ENCODE measurements at regions of chr4 and their contacts with region 1.

Region 1: DNA sequence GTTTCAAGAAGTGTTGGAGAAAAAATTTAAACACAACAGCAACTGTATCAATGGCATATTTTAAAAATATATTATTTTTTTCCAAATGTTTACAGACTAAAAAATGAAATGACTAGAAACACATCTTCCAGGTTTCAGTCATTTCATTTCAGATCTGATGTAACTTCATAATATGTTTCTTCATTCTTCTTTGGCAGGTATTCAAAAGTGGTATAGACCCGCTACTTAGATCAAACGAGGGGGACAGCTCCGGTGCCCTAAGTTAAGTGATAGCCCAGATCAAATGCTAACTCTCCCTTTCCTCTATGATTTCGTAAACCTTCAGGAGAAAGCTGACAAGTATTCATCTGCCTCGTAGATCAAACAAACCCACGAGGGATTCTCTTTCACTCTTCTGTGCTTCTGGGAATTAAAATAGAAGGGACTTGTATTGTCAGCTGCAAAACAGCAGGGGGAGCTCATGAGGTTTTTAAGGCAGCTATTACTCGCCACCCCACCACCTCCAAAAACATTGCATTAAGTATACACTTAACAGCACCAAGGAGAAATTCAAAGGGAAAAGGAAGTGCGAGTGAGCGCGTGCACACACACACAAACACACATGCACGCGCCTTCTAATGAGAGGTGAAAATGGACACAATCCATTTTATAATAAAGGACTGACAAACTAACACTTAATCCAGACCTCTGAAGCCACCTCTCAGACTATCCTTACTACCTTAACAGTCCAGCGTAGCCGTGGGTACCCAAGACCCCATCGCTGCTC is 21.4 kb downstream of the HELT start:
- DNase-seq: peak in 7 of 9 donors; percentile 14 to 63 (median 57)
- ATAC-seq: peak; percentile 82
- H3K4me3 ChIP-seq: no peak overlapping the region
- H3K4me3 Mint-ChIP-seq: peak overlapping the region in 7 of 10 donors; percentile 9 to 76 (median 37)
- H3K27ac ChIP-seq: no peak overlapping the region
- H3K27ac Mint-ChIP-seq: no peak overlapping the region
- H3K4me1 ChIP-seq: peaks cover 0 to 2% of the 10 kb centered on the region in 2 donors
- H3K4me1 Mint-ChIP-seq: peaks cover 0 to 8% (median 5%) of the 10 kb centered on the region in 7 donors
- H3K27me3 ChIP-seq: no peaks in the 10 kb centered on the region
- H3K27me3 Mint-ChIP-seq: peaks cover 19 to 26% (median 22%) of the 10 kb centered on the region in 5 donors

Region 2: GRCh38 chr4:185020293-185020808 is 19.3 kb before region 1 on chr4:
- CTCF ChIA-PET with region 1: no interaction called
- POLR2A ChIA-PET with region 1: no interaction called
- intact Hi-C with region 1: no loop called
- DNase-seq: no peak
- ATAC-seq: no peak
- H3K4me3 ChIP-seq: no peak overlapping the region
- H3K4me3 Mint-ChIP-seq: peak overlapping the region in 1 of 10 donors; percentile 40
- H3K27ac ChIP-seq: no peak overlapping the region
- H3K27ac Mint-ChIP-seq: peak overlapping the region in 1 of 9 donors; percentile 42
- H3K4me1 ChIP-seq: no peaks in the 10 kb centered on the region
- H3K4me1 Mint-ChIP-seq: peaks cover 4 to 27% (median 15%) of the 10 kb centered on the region in 7 donors
- H3K27me3 ChIP-seq: no peaks in the 10 kb centered on the region
- H3K27me3 Mint-ChIP-seq: peaks cover 69 to 94% (median 72%) of the 10 kb centered on the region in 5 donors

Region 3: GRCh38 chr4:185096032-185096653 is 56.5 kb after region 1 on chr4:
- CTCF ChIA-PET with region 1: interaction called, 16 read pairs
- POLR2A ChIA-PET with region 1: no interaction called
- intact Hi-C with region 1: loop called (anchors 1 to 2 kb)
- DNase-seq: peak in 6 of 9 donors; percentile 16 to 39 (median 27)
- ATAC-seq: peak; percentile 27
- H3K4me3 ChIP-seq: no peak overlapping the region
- H3K4me3 Mint-ChIP-seq: no peak overlapping the region
- H3K27ac ChIP-seq: no peak overlapping the region
- H3K27ac Mint-ChIP-seq: no peak overlapping the region
- H3K4me1 ChIP-seq: no peaks in the 10 kb centered on the region
- H3K4me1 Mint-ChIP-seq: no peaks in the 10 kb centered on the region
- H3K27me3 ChIP-seq: no peaks in the 10 kb centered on the region
- H3K27me3 Mint-ChIP-seq: peaks cover 9 to 30% (median 14%) of the 10 kb centered on the region in 5 donors

Region 4: DNA sequence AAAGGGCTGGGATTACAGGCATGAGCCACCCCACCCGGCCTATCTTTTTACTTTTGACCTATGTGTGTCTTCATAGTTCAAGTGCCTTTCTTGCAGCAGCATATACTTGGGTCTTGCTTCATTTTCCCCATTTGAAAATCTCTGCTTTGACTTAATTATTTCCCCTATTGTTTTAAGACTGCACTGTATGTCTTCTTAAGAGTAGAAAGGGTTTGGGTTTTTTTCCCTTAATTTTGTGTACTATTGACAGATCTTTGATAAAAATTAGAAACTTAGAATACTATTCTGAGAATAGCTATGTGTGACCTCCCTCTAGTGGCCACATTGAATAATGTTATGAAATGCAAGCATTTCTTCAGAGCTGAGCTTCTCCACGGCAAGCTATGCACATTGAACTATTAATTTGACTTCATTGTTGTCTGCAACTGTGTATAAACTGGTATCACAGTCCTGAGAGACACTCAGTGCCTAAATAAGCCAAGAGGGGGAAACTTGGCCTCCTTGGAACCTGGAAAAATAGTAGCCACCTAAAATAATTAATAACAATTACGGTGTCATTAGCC is 94.7 kb after region 1 on chr4:
- CTCF ChIA-PET with region 1: interaction called, 3 read pairs
- POLR2A ChIA-PET with region 1: no interaction called
- intact Hi-C with region 1: loop called (anchors 1 kb)
- DNase-seq: peak in 6 of 9 donors; percentile 22 to 52 (median 40)
- ATAC-seq: peak; percentile 86
- H3K4me3 ChIP-seq: no peak overlapping the region
- H3K4me3 Mint-ChIP-seq: no peak overlapping the region
- H3K27ac ChIP-seq: no peak overlapping the region
- H3K27ac Mint-ChIP-seq: no peak overlapping the region
- H3K4me1 ChIP-seq: no peaks in the 10 kb centered on the region
- H3K4me1 Mint-ChIP-seq: no peaks in the 10 kb centered on the region
- H3K27me3 ChIP-seq: peaks cover 0 to 3% of the 10 kb centered on the region in 2 donors
- H3K27me3 Mint-ChIP-seq: peaks cover 29 to 68% (median 40%) of the 10 kb centered on the region in 5 donors

Region 5: GRCh38 chr4:185304944-185305690 is 265.4 kb after region 1 on chr4:
- CTCF ChIA-PET with region 1: interaction called, 6 read pairs
- POLR2A ChIA-PET with region 1: no interaction called
- intact Hi-C with region 1: loop called in 1 of 2 experiments (anchors 1 kb)
- DNase-seq: peak in 7 of 9 donors; percentile 0 to 44 (median 36)
- ATAC-seq: peak; percentile 59
- H3K4me3 ChIP-seq: no peak overlapping the region
- H3K4me3 Mint-ChIP-seq: no peak overlapping the region
- H3K27ac ChIP-seq: no peak overlapping the region
- H3K27ac Mint-ChIP-seq: peak overlapping the region in 2 of 9 donors; percentile 25 to 75
- H3K4me1 ChIP-seq: no peaks in the 10 kb centered on the region
- H3K4me1 Mint-ChIP-seq: peaks cover 0 to 15% (median 0%) of the 10 kb centered on the region in 7 donors
- H3K27me3 ChIP-seq: no peaks in the 10 kb centered on the region
- H3K27me3 Mint-ChIP-seq: no peaks in the 10 kb centered on the region

Region 6: GRCh38 chr4:185597532-185598188 is 558.0 kb after region 1 on chr4:
- CTCF ChIA-PET with region 1: interaction called, 4 read pairs
- POLR2A ChIA-PET with region 1: no interaction called
- intact Hi-C with region 1: loop called in 1 of 2 experiments (anchors 1 kb)
- DNase-seq: peak; percentile 42 to 60 (median 56)
- ATAC-seq: peak; percentile 87
- H3K4me3 ChIP-seq: no peak overlapping the region
- H3K4me3 Mint-ChIP-seq: no peak overlapping the region
- H3K27ac ChIP-seq: no peak overlapping the region
- H3K27ac Mint-ChIP-seq: no peak overlapping the region
- H3K4me1 ChIP-seq: no peaks in the 10 kb centered on the region
- H3K4me1 Mint-ChIP-seq: peaks cover 0 to 4% (median 0%) of the 10 kb centered on the region in 7 donors
- H3K27me3 ChIP-seq: peaks cover 4 to 5% of the 10 kb centered on the region in 2 donors
- H3K27me3 Mint-ChIP-seq: peaks cover 18 to 33% (median 25%) of the 10 kb centered on the region in 5 donors

Region 7: GRCh38 chr4:186137196-186137794 is 1097.6 kb after region 1 on chr4:
- CTCF ChIA-PET with region 1: no interaction called
- POLR2A ChIA-PET with region 1: no interaction called
- intact Hi-C with region 1: loop called in 1 of 2 experiments (anchors 5 kb)
- DNase-seq: no peak
- ATAC-seq: no peak
- H3K4me3 ChIP-seq: no peak overlapping the region
- H3K4me3 Mint-ChIP-seq: no peak overlapping the region
- H3K27ac ChIP-seq: no peak overlapping the region
- H3K27ac Mint-ChIP-seq: no peak overlapping the region
- H3K4me1 ChIP-seq: no peaks in the 10 kb centered on the region
- H3K4me1 Mint-ChIP-seq: peaks cover 0 to 17% (median 0%) of the 10 kb centered on the region in 7 donors
- H3K27me3 ChIP-seq: no peaks in the 10 kb centered on the region
- H3K27me3 Mint-ChIP-seq: peaks cover 0 to 21% (median 2%) of the 10 kb centered on the region in 5 donors

Measured in naive thymus-derived CD4-positive, alpha-beta T cell (primary cell).